Left lung (tissue), 14 donors: ENCODE measurements at regions of chrX and their contacts with region 1.

Region 1: GRCh38 chrX:149865390-149865789 is 15.6 kb upstream of the MAGEA8 start:
- DNase-seq: no peak
- ATAC-seq: no peak
- H3K4me3 ChIP-seq: no peak overlapping the region
- H3K27ac ChIP-seq: no peak overlapping the region
- H3K4me1 ChIP-seq: no peaks in the 10 kb centered on the region
- H3K27me3 ChIP-seq: no peaks in the 10 kb centered on the region
- CTCF ChIP-seq: no peak

Region 2: GRCh38 chrX:149682956-149683947 is 182.1 kb before region 1 on chrX:
- intact Hi-C with region 1: loop called in 1 of 2 experiments (anchors 10 kb)
- DNase-seq: no peak
- ATAC-seq: no peak
- H3K4me3 ChIP-seq: no peak overlapping the region
- H3K27ac ChIP-seq: no peak overlapping the region
- H3K4me1 ChIP-seq: no peaks in the 10 kb centered on the region
- H3K27me3 ChIP-seq: no peaks in the 10 kb centered on the region
- CTCF ChIP-seq: no peak

Region 3: GRCh38 chrX:150731795-150732194 is 866.4 kb after region 1 on chrX:
- intact Hi-C with region 1: no loop called
- DNase-seq: no peak
- ATAC-seq: no peak
- H3K4me3 ChIP-seq: no peak overlapping the region
- H3K27ac ChIP-seq: no peak overlapping the region
- H3K4me1 ChIP-seq: no peaks in the 10 kb centered on the region
- H3K27me3 ChIP-seq: no peaks in the 10 kb centered on the region
- CTCF ChIP-seq: no peak